ENCODE measurements at regions of chr5 and their contacts with region 1.

Region 1: DNA sequence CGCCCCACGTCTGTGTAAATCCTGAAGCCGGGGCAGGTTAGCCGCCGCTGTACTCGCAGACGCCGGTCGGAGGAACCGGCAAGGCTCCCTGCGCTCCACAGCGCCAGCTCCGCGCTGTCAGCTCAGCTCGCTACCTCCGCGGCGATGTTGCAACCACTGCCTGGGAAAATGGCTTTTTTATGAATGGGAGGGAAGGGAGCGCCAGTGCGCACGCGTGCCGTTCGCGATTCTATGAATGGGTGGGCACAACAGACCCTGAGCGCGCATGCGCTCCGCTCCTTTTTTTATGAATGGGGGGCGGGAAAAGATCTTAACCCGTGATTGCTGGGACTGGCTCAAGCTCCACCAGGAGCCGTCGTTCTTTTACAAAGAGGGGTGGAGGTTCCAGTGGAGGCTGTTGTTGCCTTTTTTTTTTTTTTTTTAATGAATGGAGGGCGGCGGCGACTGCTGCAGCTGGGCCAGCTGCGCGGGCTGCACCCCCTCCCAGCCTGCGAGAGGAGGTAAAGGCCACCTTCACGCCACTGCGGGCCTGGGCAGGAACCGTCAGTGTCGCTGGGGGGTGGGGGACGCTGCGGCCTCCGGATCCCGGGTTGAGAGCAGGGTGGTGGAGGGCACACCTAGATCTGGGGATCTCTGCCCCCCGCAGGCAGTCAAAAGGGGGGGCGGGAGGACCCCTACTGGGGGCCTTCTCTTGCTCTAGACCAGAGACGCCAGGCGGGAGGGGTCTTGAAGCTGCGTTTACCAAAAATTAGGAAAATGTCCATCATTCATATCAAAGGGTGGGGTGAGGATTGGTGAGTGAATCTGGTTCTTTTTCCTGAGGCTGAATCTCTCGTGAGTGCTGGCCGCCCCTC is at the start of gene SPRY4:
- DNase-seq: peak; percentile 96
- ATAC-seq: peak; percentile 64
- H3K4me3 ChIP-seq: peak within 1 kb of the TSS; percentile 83 to 96
- H3K27ac ChIP-seq: peak within 1 kb of the TSS; percentile 97
- H3K4me1 ChIP-seq: peaks cover 44% of the 10 kb centered on the region
- H3K27me3 ChIP-seq: no peaks in the 10 kb centered on the region
- CTCF ChIP-seq: peak; percentile 28; the same call in 1 of the 2 replicates
- total RNA-seq, gene SPRY4: 35.6 TPM

Region 2: GRCh38 chr5:141001854-141002604 is 1323.1 kb before region 1 on chr5:
- CTCF ChIA-PET with region 1: no interaction called
- POLR2A ChIA-PET with region 1: no interaction called
- in situ Hi-C with region 1: no loop called
- intact Hi-C with region 1: no loop called
- DNase-seq: no peak
- ATAC-seq: peak; percentile 74
- H3K4me3 ChIP-seq: peak overlapping the region; percentile 46 to 73
- H3K27ac ChIP-seq: peak overlapping the region; percentile 88
- H3K4me1 ChIP-seq: peaks cover 43% of the 10 kb centered on the region
- H3K27me3 ChIP-seq: no peaks in the 10 kb centered on the region
- CTCF ChIP-seq: no peak

Region 3: GRCh38 chr5:142151436-142152383 is 173.4 kb before region 1 on chr5:
- CTCF ChIA-PET with region 1: no interaction called
- POLR2A ChIA-PET with region 1: no interaction called
- in situ Hi-C with region 1: no loop called
- intact Hi-C with region 1: loop called (anchors 5 kb)
- DNase-seq: peak; percentile 53
- ATAC-seq: peak; percentile 80
- H3K4me3 ChIP-seq: no peak overlapping the region
- H3K27ac ChIP-seq: no peak overlapping the region
- H3K4me1 ChIP-seq: no peaks in the 10 kb centered on the region; the same call in 1 of the 2 replicates
- H3K27me3 ChIP-seq: no peaks in the 10 kb centered on the region
- CTCF ChIP-seq: peak; percentile 82; the same call in 1 of the 2 replicates

Region 4: GRCh38 chr5:142175039-142175438 is 150.1 kb before region 1 on chr5:
- CTCF ChIA-PET with region 1: no interaction called
- POLR2A ChIA-PET with region 1: interaction called, 14 read pairs
- in situ Hi-C with region 1: no loop called
- intact Hi-C with region 1: no loop called
- DNase-seq: no peak
- ATAC-seq: no peak
- H3K4me3 ChIP-seq: no peak overlapping the region
- H3K27ac ChIP-seq: peak overlapping the region; percentile 10; the same call in 1 of the 2 replicates
- H3K4me1 ChIP-seq: no peaks in the 10 kb centered on the region
- H3K27me3 ChIP-seq: no peaks in the 10 kb centered on the region
- CTCF ChIP-seq: no peak

Region 5: GRCh38 chr5:142339781-142340180 is 14.7 kb after region 1 on chr5:
- CTCF ChIA-PET with region 1: interaction called, 12 read pairs
- POLR2A ChIA-PET with region 1: interaction called, 6 read pairs
- in situ Hi-C with region 1: no loop called
- intact Hi-C with region 1: no loop called
- DNase-seq: no peak
- ATAC-seq: no peak
- H3K4me3 ChIP-seq: no peak overlapping the region
- H3K27ac ChIP-seq: no peak overlapping the region
- H3K4me1 ChIP-seq: no peaks in the 10 kb centered on the region
- H3K27me3 ChIP-seq: no peaks in the 10 kb centered on the region
- CTCF ChIP-seq: no peak

Region 6: DNA sequence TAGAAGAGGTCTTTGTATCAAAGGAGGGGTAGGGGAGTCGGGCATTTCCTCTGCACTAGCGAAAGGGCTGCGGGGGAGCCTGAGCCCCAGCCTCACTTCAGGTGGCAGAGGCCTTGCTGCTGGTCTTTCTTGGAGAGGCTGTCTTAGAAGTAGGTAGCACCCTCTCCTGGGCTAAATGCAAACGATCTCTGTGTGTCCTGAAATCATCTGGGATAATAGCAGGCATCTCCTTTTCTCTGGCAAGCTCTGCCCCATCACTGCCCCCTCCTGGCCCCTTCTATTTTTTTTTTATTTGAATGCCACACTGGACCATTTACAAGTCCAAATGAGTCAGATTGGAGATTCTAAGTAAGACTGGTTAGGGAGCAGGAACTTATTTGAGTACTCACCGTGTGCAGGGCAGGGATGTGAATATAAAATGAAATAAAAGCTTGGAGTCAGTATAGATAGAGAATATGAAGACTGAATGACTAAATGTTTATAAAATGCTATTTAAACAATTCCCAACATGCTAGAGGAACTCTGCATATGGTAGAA is 223.7 kb after region 1 on chr5:
- CTCF ChIA-PET with region 1: interaction called, 9 read pairs
- POLR2A ChIA-PET with region 1: interaction called, 3 read pairs
- in situ Hi-C with region 1: no loop called
- intact Hi-C with region 1: loop called (anchors 2 kb)
- DNase-seq: peak; percentile 97
- ATAC-seq: peak; percentile 99
- H3K4me3 ChIP-seq: no peak overlapping the region
- H3K27ac ChIP-seq: peak overlapping the region; percentile 60
- H3K4me1 ChIP-seq: peaks cover 5% of the 10 kb centered on the region
- H3K27me3 ChIP-seq: no peaks in the 10 kb centered on the region
- CTCF ChIP-seq: peak; percentile 97

Measured in Panc1 (cell line).